ENCODE measurements at regions of chr3 and their contacts with region 1.

Region 1: GRCh38 chr3:159775372-159775961 is 213.2 kb upstream of the IL12A start:
- DNase-seq: peak; percentile 50 to 93
- H3K4me3 ChIP-seq: peak overlapping the region in 1 of 2 donors; percentile 34
- H3K27ac ChIP-seq: peak overlapping the region; percentile 89 to 95
- H3K4me1 ChIP-seq: peaks cover 10 to 58% of the 10 kb centered on the region in 2 donors
- H3K27me3 ChIP-seq: no peaks in the 10 kb centered on the region
- CTCF ChIP-seq: peak in 1 of 3 experiments; percentile 6

Region 2: GRCh38 chr3:159796744-159797143 is 21.3 kb after region 1 on chr3:
- intact Hi-C with region 1: loop called (anchors 1 kb)
- DNase-seq: no peak
- H3K4me3 ChIP-seq: no peak overlapping the region
- H3K27ac ChIP-seq: peak overlapping the region; percentile 86 to 89
- H3K4me1 ChIP-seq: peaks cover 9 to 77% of the 10 kb centered on the region in 2 donors
- H3K27me3 ChIP-seq: no peaks in the 10 kb centered on the region
- CTCF ChIP-seq: no peak

Measured in ascending aorta (tissue), 2 donors.